ENCODE measurements at regions of chr2 and their contacts with region 1.

Region 1: GRCh38 chr2:11124503-11125068 is 30.7 kb upstream of the SLC66A3 start:
- DNase-seq: peak; percentile 85
- H3K4me3 Mint-ChIP-seq: no peak overlapping the region
- H3K27ac Mint-ChIP-seq: no peak overlapping the region
- H3K4me1 Mint-ChIP-seq: peaks cover 2% of the 10 kb centered on the region
- H3K27me3 Mint-ChIP-seq: no peaks in the 10 kb centered on the region

Region 2: GRCh38 chr2:11073251-11073650 is 51.3 kb before region 1 on chr2:
- CTCF ChIA-PET with region 1: interaction called, 7 read pairs
- intact Hi-C with region 1: loop called (anchors 2 kb)
- DNase-seq: peak; percentile 52
- H3K4me3 Mint-ChIP-seq: no peak overlapping the region
- H3K27ac Mint-ChIP-seq: no peak overlapping the region
- H3K4me1 Mint-ChIP-seq: peaks cover 4% of the 10 kb centered on the region
- H3K27me3 Mint-ChIP-seq: peaks cover 23% of the 10 kb centered on the region

Measured in activated naive CD4-positive, alpha-beta T cell treated with anti-CD3 and anti-CD28 coated beads for 36 hours (primary cell).